K562 (cell line): ENCODE measurements at regions of chr10 and their contacts with region 1.

Region 1: DNA sequence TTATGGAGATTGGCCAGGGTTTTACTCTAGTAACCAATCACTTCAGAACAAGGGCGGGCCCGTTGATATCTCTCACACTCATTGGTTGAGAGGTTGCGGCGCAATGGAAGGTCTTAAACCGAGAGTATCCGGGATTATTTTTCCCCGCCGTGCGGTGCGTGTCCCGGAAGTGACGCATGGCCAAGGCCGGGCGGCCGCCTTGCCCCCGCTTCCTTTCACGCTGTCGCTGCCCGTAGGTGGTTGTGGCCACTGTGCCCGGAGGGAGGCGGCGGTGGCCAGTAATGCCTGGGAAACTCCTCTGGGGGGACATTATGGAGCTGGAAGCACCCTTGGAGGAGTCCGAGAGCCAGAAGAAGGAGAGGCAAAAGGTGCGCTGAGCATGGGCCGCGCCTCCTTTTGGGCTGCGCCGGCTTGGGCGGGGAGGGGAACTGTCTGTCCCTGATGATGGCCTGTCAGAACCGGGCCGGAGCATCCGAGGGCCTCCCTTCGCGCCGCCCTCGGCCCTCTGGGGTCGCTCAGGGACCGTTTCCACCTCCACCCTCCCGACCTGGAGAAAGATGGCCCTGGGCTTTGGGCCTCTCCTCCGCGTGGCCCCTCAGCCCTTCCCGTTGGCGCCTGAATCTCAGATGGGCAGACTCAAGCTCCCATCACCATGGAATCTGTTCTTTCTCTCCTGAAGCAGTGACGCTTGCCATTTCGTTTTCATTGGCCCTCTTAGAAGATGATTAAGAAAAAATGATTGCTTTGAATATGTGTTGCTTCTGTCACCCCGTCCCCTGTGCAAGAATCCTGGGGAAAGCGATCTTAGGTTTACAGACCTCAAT is at the start of gene DDX50:
- DNase-seq: peak in 3 of 4 experiments; percentile 94 to 99 (median 97)
- ATAC-seq: peak; percentile 97
- H3K4me3 ChIP-seq: peak within 1 kb of the TSS; percentile 74
- H3K27ac ChIP-seq: peak within 1 kb of the TSS; percentile 91
- H3K4me1 ChIP-seq: peaks cover 13 to 14% of the 10 kb centered on the region in 2 experiments; a peak in 4 of 5 replicates
- H3K27me3 ChIP-seq: no peaks in the 10 kb centered on the region
- CTCF ChIP-seq: peak in 2 of 3 experiments; percentile 16 to 33; a peak in 1 of 6 replicates
- EP300 ChIP-seq: no peak; the same call in none of the 2 replicates
- POLR2A ChIP-seq: peak; percentile 96
- RAD21 ChIP-seq: 0 out of 4 replicates have a peak, but pooled peaks of 1 of the 2 experiments have one; percentile 20
- polyA plus RNA-seq, gene DDX50: 36.7 to 57.4 TPM

Region 2: GRCh38 chr10:67861750-67862460 is 1039.4 kb before region 1 on chr10:
- CTCF ChIA-PET with region 1: no interaction called
- POLR2A ChIA-PET with region 1: no interaction called
- in situ Hi-C with region 1: no loop called
- intact Hi-C with region 1: loop called (anchors 10 kb)
- DNase-seq: no peak
- ATAC-seq: peak; percentile 74
- H3K4me3 ChIP-seq: no peak overlapping the region
- H3K27ac ChIP-seq: no peak overlapping the region
- H3K4me1 ChIP-seq: no peaks in the 10 kb centered on the region; a peak in 1 of 5 replicates
- H3K27me3 ChIP-seq: no peaks in the 10 kb centered on the region
- CTCF ChIP-seq: no peak
- EP300 ChIP-seq: no peak
- POLR2A ChIP-seq: no peak
- RAD21 ChIP-seq: no peak

Region 3: GRCh38 chr10:68348265-68348741 is 553.0 kb before region 1 on chr10:
- CTCF ChIA-PET with region 1: no interaction called
- POLR2A ChIA-PET with region 1: no interaction called
- in situ Hi-C with region 1: no loop called
- intact Hi-C with region 1: loop called (anchors 5 kb)
- DNase-seq: peak; percentile 56 to 73 (median 56)
- ATAC-seq: peak; percentile 80
- H3K4me3 ChIP-seq: no peak overlapping the region
- H3K27ac ChIP-seq: no peak overlapping the region
- H3K4me1 ChIP-seq: no peaks in the 10 kb centered on the region
- H3K27me3 ChIP-seq: no peaks in the 10 kb centered on the region
- CTCF ChIP-seq: peak; percentile 74 to 82 (median 80)
- EP300 ChIP-seq: no peak
- POLR2A ChIP-seq: no peak
- RAD21 ChIP-seq: peak in 1 of 2 experiments; percentile 57; a peak in 3 of 4 replicates

Region 4: DNA sequence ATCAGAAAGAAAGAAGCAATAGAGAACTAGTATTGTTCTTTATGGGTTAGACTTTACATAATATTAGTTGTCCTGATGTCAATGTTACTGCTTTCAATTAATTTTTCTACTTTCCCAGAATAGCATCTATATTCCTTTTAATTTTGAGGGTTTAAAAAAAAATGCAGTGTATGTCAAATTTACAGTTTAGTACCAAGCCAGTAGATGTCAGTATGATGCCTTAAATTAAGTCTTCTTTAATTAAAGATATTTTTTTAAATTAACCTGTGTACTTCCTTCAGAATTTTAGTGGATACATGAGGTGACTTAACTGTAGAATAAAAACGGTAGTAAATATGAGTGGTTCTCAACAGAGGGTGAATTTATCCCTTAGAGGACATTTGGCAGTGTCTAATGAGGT is 109.2 kb before region 1 on chr10:
- CTCF ChIA-PET with region 1: interaction called, 39 read pairs
- POLR2A ChIA-PET with region 1: no interaction called
- in situ Hi-C with region 1: no loop called
- intact Hi-C with region 1: loop called (anchors 2 kb)
- DNase-seq: no peak
- ATAC-seq: no peak
- H3K4me3 ChIP-seq: no peak overlapping the region
- H3K27ac ChIP-seq: no peak overlapping the region
- H3K4me1 ChIP-seq: no peaks in the 10 kb centered on the region
- H3K27me3 ChIP-seq: no peaks in the 10 kb centered on the region
- CTCF ChIP-seq: peak in 2 of 3 experiments; percentile 12 to 51; a peak in 3 of 6 replicates
- EP300 ChIP-seq: no peak
- POLR2A ChIP-seq: no peak
- RAD21 ChIP-seq: peak; percentile 35 to 53; a peak in 3 of 4 replicates

Region 5: DNA sequence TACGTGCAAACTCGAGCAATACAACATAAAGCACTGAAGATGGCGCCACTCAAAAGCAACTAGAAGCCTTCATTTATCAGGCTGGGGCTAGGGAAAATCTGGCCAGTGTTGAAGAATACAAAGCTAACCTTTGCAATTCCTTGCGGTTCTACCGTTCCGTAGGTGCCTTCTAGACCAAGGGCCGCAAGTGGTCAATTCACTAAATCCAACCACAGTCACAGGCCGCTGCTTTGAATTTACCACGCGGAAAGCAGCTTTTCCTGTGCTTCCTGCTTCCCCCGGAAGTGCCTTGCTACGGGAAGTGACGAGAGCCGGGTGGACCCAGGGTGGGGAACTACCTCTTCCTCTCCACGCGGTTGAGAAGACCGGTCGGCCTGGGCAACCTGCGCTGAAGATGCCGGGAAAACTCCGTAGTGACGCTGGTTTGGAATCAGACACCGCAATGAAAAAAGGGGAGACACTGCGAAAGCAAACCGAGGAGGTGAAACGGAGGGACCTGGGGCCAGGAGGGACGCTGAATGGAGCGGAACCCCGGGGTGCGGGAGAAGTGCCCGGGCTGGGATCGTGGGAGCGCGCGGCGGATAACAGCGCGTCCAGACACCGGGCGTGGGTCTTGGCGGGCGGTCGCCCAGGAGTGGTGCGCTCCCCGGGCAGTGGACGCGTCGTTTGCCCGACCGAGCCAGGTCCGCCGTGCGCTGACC is 54.7 kb after region 1 on chr10 and contains the start of gene DDX21:
- CTCF ChIA-PET with region 1: no interaction called
- POLR2A ChIA-PET with region 1: interaction called, 10 read pairs
- in situ Hi-C with region 1: no loop called
- intact Hi-C with region 1: no loop called
- DNase-seq: peak; percentile 93 to 97 (median 96)
- ATAC-seq: peak; percentile 90
- H3K4me3 ChIP-seq: peak within 1 kb of the TSS; percentile 93
- H3K27ac ChIP-seq: peak within 1 kb of the TSS; percentile 95
- H3K4me1 ChIP-seq: peaks cover 22% of the 10 kb centered on the region in 2 experiments; a peak in 4 of 5 replicates
- H3K27me3 ChIP-seq: no peaks in the 10 kb centered on the region
- CTCF ChIP-seq: peak; percentile 63 to 86 (median 76)
- EP300 ChIP-seq: no peak
- POLR2A ChIP-seq: peak; percentile 99
- RAD21 ChIP-seq: peak; percentile 49 to 55
- polyA plus RNA-seq, gene DDX21: 143 to 156 TPM

Region 6: GRCh38 chr10:69107699-69108098 is 206.4 kb after region 1 on chr10:
- CTCF ChIA-PET with region 1: no interaction called
- POLR2A ChIA-PET with region 1: no interaction called
- in situ Hi-C with region 1: no loop called
- intact Hi-C with region 1: no loop called
- DNase-seq: no peak
- ATAC-seq: no peak
- H3K4me3 ChIP-seq: no peak overlapping the region
- H3K27ac ChIP-seq: no peak overlapping the region
- H3K4me1 ChIP-seq: no peaks in the 10 kb centered on the region; a peak in 1 of 5 replicates
- H3K27me3 ChIP-seq: no peaks in the 10 kb centered on the region
- CTCF ChIP-seq: no peak
- EP300 ChIP-seq: no peak
- POLR2A ChIP-seq: no peak
- RAD21 ChIP-seq: no peak

Region 7: DNA sequence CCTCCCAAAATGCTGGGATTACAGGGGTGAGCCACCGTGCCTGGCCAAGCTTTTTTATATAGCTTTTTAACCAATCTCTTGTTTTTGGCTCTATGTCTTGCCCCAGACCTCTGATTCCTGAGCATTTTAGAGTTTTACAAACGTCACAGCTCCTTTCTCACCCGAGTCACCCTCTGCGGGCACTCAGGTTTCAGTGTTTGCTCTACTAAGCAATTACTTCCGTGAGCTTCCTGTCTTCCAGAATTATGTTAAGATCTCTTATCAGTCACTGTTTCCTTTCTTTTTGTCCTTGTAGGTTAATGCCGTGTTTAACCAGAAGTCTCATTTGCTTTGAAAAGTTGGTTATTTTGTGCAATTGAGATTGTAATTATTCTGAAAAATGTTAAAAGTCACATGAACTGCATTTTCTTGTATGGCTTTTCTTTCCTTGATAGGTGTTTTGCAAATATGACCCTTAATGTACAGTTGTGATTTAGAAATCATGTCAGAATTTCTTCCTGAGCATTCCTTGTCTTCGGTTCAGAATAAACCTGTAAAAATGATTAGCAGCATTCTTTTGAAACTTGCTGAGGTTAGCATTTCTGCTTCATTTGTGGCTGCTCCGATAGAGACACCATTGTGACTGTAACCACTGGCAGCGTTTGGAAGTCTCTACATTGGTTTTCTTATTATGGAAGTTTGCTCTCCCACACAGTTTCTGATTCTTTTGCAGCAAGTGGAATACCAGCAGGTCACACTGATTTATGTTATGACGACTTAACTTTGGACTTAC is 314.3 kb after region 1 on chr10:
- CTCF ChIA-PET with region 1: no interaction called
- POLR2A ChIA-PET with region 1: no interaction called
- in situ Hi-C with region 1: no loop called
- intact Hi-C with region 1: no loop called
- DNase-seq: peak in 1 of 4 experiments; percentile 25
- ATAC-seq: no peak
- H3K4me3 ChIP-seq: no peak overlapping the region
- H3K27ac ChIP-seq: no peak overlapping the region
- H3K4me1 ChIP-seq: peaks cover 3 to 44% of the 10 kb centered on the region in 2 experiments
- H3K27me3 ChIP-seq: no peaks in the 10 kb centered on the region
- CTCF ChIP-seq: no peak
- EP300 ChIP-seq: 0 out of 2 replicates have a peak, but pooled peaks have one; percentile 6
- POLR2A ChIP-seq: no peak
- RAD21 ChIP-seq: no peak